Ovary (tissue), 10 donors: ENCODE measurements at regions of chr12 and their contacts with region 1.

Region 1: GRCh38 chr12:93378373-93379325 is 924 bp downstream of the NUDT4 start:
- DNase-seq: peak; percentile 26 to 63 (median 49)
- H3K4me3 ChIP-seq: peak overlapping the region; percentile 97
- H3K27ac ChIP-seq: peak overlapping the region; percentile 66 to 89
- H3K4me1 ChIP-seq: peaks cover 11% of the 10 kb centered on the region
- H3K27me3 ChIP-seq: no peaks in the 10 kb centered on the region
- CTCF ChIP-seq: no peak
- EP300 ChIP-seq: no peak
- POLR2A ChIP-seq: no peak

Region 2: GRCh38 chr12:93176165-93176564 is 202.5 kb before region 1 on chr12:
- intact Hi-C with region 1: loop called in 1 of 4 experiments (anchors 5 kb)
- DNase-seq: peak in 1 of 5 donors; percentile 35
- H3K4me3 ChIP-seq: no peak overlapping the region
- H3K27ac ChIP-seq: peak overlapping the region in 1 of 2 donors; percentile 73
- H3K4me1 ChIP-seq: peaks cover 28% of the 10 kb centered on the region
- H3K27me3 ChIP-seq: no peaks in the 10 kb centered on the region
- CTCF ChIP-seq: no peak
- EP300 ChIP-seq: no peak
- POLR2A ChIP-seq: no peak

Region 3: GRCh38 chr12:93302331-93303229 is 76.1 kb before region 1 on chr12:
- intact Hi-C with region 1: no loop called
- DNase-seq: peak in 1 of 5 donors; percentile 30
- H3K4me3 ChIP-seq: no peak overlapping the region
- H3K27ac ChIP-seq: no peak overlapping the region
- H3K4me1 ChIP-seq: peaks cover 5% of the 10 kb centered on the region
- H3K27me3 ChIP-seq: no peaks in the 10 kb centered on the region
- CTCF ChIP-seq: no peak
- EP300 ChIP-seq: peak; percentile 81
- POLR2A ChIP-seq: no peak

Region 4: DNA sequence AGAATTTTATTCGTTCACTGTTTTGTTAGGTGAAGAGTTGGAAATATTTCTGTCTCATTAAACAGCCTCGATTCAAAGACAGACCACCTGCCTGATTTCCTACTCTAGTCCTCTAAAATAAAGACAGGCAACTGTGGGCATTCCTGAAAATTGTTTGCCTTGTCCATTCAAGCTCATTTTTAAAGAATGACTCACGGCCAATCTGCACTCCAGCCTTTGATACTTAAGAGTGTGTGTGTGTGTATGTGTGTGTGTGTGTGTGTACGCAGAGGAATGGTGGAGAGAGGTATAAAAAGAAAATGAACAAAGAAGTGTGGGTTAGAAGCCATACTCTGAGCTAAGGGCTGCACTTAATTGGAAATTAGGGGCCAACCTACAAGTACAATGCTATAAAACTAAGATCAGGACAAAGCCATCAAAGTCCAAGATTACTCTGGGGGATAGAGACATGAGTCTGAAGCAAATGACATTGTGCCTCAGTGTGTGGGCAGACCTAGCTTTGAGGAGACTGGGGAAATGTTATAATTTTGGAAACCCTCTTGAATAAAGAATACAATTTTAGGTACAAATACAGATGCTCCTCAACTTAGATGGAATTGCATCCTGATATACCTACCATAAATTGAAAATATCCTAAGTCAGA is 148.3 kb after region 1 on chr12:
- intact Hi-C with region 1: no loop called
- DNase-seq: no peak
- H3K4me3 ChIP-seq: no peak overlapping the region
- H3K27ac ChIP-seq: no peak overlapping the region
- H3K4me1 ChIP-seq: no peaks in the 10 kb centered on the region
- H3K27me3 ChIP-seq: no peaks in the 10 kb centered on the region
- CTCF ChIP-seq: no peak
- EP300 ChIP-seq: no peak
- POLR2A ChIP-seq: no peak

Region 5: DNA sequence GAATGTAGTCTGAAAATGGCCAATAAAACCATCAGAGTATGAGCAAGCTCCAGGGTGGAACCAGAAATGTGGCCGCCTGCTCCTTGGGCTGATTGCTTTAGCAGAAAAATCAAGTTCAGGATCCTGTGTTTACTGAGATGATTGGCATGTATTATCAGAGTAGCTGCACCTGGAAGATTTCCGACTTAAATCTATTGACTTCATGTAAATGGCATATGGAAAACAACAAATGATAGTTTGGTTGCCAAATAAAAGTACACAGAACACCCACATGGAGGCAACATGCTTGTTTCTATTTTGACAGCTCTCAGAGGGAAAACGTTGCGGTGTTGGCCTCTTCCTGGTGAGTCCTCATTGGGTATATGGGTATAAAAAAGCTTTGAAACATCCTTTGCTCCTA is 225.1 kb after region 1 on chr12:
- intact Hi-C with region 1: no loop called
- DNase-seq: no peak
- H3K4me3 ChIP-seq: no peak overlapping the region
- H3K27ac ChIP-seq: no peak overlapping the region
- H3K4me1 ChIP-seq: peaks cover 2% of the 10 kb centered on the region
- H3K27me3 ChIP-seq: no peaks in the 10 kb centered on the region
- CTCF ChIP-seq: no peak
- EP300 ChIP-seq: no peak
- POLR2A ChIP-seq: no peak